AG04450 (cell line): ENCODE measurements at regions of chr12 and their contacts with region 1.

Region 1: GRCh38 chr12:48814262-48815125 is 3.8 kb upstream of the CACNB3 start:
- DNase-seq: no peak
- H3K4me3 ChIP-seq: peak overlapping the region; percentile 90
- H3K27ac ChIP-seq: peak overlapping the region; percentile 99
- H3K27me3 ChIP-seq: no peaks in the 10 kb centered on the region
- CTCF ChIP-seq: peak; percentile 93

Region 2: DNA sequence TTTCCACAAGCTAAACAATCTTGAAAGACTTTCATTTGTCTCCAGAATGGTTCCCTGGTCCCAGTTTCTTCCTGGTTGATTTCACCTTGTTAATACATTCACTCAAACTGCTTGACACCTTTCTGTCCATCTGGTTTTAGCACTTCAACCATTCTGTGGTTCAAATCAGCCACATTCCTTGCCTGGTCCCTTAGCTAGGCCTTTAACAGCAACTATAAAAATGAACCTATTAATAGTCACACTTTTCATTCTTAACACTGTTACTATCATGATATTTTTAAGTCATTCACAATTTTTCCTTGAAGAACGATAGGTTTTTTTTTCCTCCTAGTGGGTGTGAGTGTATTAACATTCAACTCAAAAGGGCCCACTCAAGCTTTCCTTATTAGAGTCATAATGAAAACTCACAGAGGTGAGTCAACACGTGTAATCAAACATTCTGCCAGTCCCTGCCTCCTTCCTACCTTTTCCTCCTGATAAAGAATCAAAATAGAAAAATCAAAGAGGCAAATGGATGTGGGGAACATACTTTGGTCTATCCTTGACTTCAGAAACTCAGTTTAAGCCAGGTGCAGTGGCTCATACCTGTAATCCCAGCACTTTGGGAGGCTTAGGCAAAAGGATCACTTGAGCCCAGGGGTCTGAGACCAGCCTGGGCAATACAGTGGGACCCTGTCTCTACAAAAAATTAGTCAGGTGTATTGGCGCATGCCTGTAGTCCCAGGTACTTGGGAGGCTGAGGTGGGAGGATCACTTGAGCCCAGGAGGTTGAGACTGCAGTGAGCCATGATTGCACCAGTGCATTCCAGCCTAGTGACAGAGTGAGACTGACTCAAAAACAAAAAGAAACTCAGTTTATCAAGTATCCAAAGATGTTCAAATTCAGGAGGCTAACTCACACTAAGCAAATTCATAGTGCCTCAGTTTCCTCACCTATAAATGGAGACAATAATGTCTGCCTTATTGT is 63.4 kb before region 1 on chr12:
- CTCF ChIA-PET with region 1: interaction called, 40 read pairs
- POLR2A ChIA-PET with region 1: interaction called, 5 read pairs
- DNase-seq: no peak
- H3K4me3 ChIP-seq: no peak overlapping the region
- H3K27ac ChIP-seq: peak overlapping the region; percentile 39
- H3K27me3 ChIP-seq: no peaks in the 10 kb centered on the region
- CTCF ChIP-seq: no peak

Region 3: GRCh38 chr12:48788854-48789796 is 25.4 kb before region 1 on chr12 and contains the start of gene ADCY6:
- CTCF ChIA-PET with region 1: interaction called, 35 read pairs
- POLR2A ChIA-PET with region 1: interaction called, 13 read pairs
- DNase-seq: no peak
- H3K4me3 ChIP-seq: peak within 1 kb of the TSS; percentile 75
- H3K27ac ChIP-seq: no peak within 1 kb of the TSS
- H3K27me3 ChIP-seq: no peaks in the 10 kb centered on the region
- CTCF ChIP-seq: no peak
- polyA plus RNA-seq, gene ADCY6: 26.7 and 31.6 TPM in 2 replicates

Region 4: GRCh38 chr12:48795480-48796455 is 18.7 kb before region 1 on chr12:
- CTCF ChIA-PET with region 1: interaction called, 35 read pairs
- POLR2A ChIA-PET with region 1: interaction called, 7 read pairs
- DNase-seq: no peak
- H3K4me3 ChIP-seq: no peak overlapping the region
- H3K27ac ChIP-seq: no peak overlapping the region
- H3K27me3 ChIP-seq: no peaks in the 10 kb centered on the region
- CTCF ChIP-seq: peak; percentile 93

Region 5: GRCh38 chr12:48865434-48866290 is 51.2 kb after region 1 on chr12 and contains the start of gene RND1:
- CTCF ChIA-PET with region 1: no interaction called
- POLR2A ChIA-PET with region 1: no interaction called
- DNase-seq: peak; percentile 70
- H3K4me3 ChIP-seq: peak within 1 kb of the TSS; percentile 66
- H3K27ac ChIP-seq: no peak within 1 kb of the TSS
- H3K27me3 ChIP-seq: peaks cover 36% of the 10 kb centered on the region
- CTCF ChIP-seq: peak; percentile 32
- polyA plus RNA-seq, gene RND1: 0.36 and 0.42 TPM in 2 replicates

Region 6: DNA sequence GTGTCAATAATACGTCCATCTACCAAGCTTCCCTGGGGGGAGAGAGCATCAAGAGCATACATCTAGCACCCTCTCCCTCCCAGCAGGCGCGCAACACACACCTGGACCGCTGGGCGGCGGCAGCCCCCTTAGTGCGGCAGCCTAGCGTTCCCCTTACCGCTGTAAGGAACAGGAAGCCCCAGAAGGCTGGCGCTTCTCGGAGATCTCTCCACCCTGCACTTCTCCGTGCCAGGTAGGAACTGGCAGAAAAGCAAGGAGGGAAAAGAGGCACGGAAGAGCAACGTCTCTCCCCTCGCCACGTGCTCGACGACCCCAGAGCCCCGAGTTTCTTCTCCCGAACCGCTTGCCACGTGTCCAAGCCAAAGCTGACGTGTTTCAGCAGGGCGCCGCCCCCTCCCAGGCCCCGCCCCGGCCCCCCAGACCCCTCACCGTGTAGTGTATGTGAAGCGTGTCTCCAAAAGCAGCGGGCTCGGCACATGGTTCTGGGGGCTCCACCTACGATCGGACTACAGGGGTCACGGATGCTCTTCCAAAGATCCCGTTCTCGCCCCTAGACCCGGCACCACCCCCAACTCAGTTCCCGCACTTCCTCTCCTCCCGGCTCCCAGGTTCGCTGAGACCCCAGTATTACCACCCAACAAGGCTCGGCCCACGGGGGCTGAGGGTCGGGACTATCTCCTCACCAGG is 110.3 kb after region 1 on chr12:
- CTCF ChIA-PET with region 1: no interaction called
- POLR2A ChIA-PET with region 1: no interaction called
- DNase-seq: no peak
- H3K4me3 ChIP-seq: peak overlapping the region; percentile 81
- H3K27ac ChIP-seq: peak overlapping the region; percentile 11
- H3K27me3 ChIP-seq: no peaks in the 10 kb centered on the region
- CTCF ChIP-seq: peak; percentile 65